Right ventricle myocardium inferior (tissue), 1 donor: ENCODE measurements at regions of chr15 and their contacts with region 1.

Region 1: DNA sequence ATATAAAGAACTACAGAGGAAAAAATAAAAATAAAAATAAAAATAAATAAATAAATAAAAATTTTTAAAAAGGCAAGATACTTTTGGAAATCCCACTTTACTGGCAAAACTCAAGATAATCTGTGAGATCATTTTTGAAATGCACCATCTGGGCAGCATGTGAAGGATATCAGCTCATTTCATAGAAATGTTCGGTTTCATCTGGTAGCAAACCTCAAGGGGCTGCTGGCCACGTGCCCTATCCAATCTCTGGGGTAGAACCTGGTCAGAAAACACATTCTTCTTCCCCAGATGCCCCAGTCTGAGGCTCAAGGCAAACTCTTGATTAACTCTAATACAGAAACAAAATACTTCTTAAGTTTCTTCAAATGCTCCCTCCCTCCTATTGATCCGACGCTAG is 166.0 kb downstream of the FMN1 start:
- DNase-seq: no peak
- ATAC-seq: no peak

Region 2: DNA sequence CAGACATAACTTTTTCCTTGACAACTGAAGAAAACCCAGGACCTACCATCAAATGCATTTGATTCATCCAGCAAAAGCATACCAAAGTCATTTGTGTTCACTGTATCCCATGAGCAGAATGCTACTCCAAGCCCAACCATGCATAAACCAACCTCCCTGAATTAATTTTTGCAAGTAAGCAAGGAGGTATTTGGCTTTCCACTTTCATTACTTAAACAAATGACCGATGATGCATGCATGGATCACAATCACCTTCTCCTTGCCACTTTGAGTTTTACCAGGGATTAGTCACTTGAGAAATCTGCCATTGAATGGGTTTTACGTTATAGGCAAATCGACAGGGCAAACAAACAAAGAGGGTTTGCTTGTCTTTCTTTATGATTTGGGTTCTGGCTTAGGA is 48.8 kb before region 1 on chr15:
- intact Hi-C with region 1: no loop called
- DNase-seq: no peak
- ATAC-seq: no peak

Region 3: GRCh38 chr15:33067941-33068481 is 39.5 kb after region 1 on chr15:
- intact Hi-C with region 1: loop called (anchors 1 kb)
- DNase-seq: peak; percentile 79
- ATAC-seq: peak; percentile 83